GM12878 (cell line): ENCODE measurements at regions of chr17 and their contacts with region 1.

Region 1: DNA sequence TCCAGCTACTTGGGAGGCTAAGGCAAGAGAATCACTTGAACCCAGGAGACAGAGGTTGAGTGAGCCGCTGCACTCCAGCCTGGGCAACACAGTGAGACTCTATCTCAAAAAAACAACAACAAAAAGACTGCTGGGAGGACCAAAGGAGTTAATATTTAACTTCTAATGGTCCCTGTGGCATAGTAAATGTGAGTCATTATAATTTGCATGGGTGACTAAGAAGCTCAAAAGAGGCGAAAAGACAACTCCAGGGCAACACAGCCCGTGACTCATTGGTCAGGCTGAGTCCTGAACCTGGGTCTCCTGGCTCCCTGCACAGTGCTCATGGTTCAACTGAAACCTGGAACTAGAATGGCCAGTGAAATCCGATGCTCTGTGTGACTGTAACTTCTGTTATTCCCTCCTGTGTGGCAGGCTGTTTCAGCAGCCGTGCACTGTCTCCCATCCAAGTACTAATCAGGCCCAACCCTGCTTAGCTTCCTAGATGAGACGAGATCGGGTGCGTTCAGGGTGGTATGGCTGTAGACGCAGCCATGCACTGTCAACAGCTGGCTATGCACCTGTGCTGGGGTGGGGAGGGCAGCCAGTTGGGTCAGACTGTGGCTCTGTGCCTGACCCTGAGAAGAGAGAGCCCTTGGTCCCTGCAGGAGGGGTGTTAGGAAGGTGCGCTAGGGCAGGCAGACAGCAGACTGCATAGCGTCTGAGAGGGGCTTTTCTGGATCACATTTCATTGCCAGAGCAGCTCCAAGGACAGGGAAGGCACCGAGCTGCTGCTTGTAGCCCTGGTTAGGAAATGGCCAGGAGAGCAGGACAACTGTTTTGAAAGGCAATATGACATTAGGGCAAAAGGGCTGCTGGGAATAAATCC is 14.5 kb upstream of the GPRC5C start:
- DNase-seq: peak; percentile 56
- ATAC-seq: peak; percentile 96
- H3K4me3 ChIP-seq: no peak overlapping the region
- H3K27ac ChIP-seq: no peak overlapping the region
- H3K4me1 ChIP-seq: peaks cover 4% of the 10 kb centered on the region; the same call in 1 of the 2 replicates
- H3K27me3 ChIP-seq: no peaks in the 10 kb centered on the region
- CTCF ChIP-seq: no peak
- EP300 ChIP-seq: no peak
- POLR2A ChIP-seq: no peak
- RAD21 ChIP-seq: no peak

Region 2: GRCh38 chr17:74340470-74341023 is 76.9 kb before region 1 on chr17:
- CTCF ChIA-PET with region 1: no interaction called
- POLR2A ChIA-PET with region 1: no interaction called
- RAD21 ChIA-PET with region 1: no interaction called
- SMC1A ChIA-PET with region 1: no interaction called
- in situ Hi-C with region 1: no loop called
- intact Hi-C with region 1: no loop called
- DNase-seq: no peak
- ATAC-seq: peak; percentile 65
- H3K4me3 ChIP-seq: no peak overlapping the region
- H3K27ac ChIP-seq: no peak overlapping the region
- H3K4me1 ChIP-seq: no peaks in the 10 kb centered on the region
- H3K27me3 ChIP-seq: no peaks in the 10 kb centered on the region; a peak in 2 of 4 replicates
- CTCF ChIP-seq: no peak
- EP300 ChIP-seq: no peak
- POLR2A ChIP-seq: no peak
- RAD21 ChIP-seq: no peak

Region 3: DNA sequence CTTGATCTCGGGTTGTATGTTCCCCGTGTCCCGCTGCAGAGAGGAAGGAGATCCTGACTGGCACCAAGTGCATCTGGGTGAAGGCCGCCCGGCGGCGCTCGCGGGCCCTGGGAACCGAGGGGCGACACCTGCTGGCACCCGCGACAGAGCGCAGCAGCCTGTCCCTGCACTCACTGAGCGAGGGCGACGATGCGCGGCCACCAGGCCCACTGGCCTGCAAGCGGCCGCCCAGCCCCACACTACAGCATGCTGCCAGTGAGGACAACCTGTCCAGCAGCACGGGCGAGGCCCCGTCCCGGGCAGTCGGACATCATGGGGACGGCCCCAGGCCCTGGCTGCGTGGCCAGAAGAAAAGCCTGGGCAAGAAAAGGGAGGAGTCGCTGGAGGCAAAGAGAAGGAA is 63.3 kb before region 1 on chr17:
- CTCF ChIA-PET with region 1: no interaction called
- POLR2A ChIA-PET with region 1: no interaction called
- RAD21 ChIA-PET with region 1: no interaction called
- SMC1A ChIA-PET with region 1: no interaction called
- in situ Hi-C with region 1: no loop called
- intact Hi-C with region 1: no loop called
- DNase-seq: no peak
- ATAC-seq: peak; percentile 96
- H3K4me3 ChIP-seq: no peak overlapping the region
- H3K27ac ChIP-seq: no peak overlapping the region
- H3K4me1 ChIP-seq: no peaks in the 10 kb centered on the region
- H3K27me3 ChIP-seq: peaks cover 3 to 8% of the 10 kb centered on the region in 2 experiments; a peak in 3 of 4 replicates
- CTCF ChIP-seq: peak; percentile 91 to 96 (median 95)
- EP300 ChIP-seq: no peak
- POLR2A ChIP-seq: no peak
- RAD21 ChIP-seq: peak; percentile 47

Region 4: DNA sequence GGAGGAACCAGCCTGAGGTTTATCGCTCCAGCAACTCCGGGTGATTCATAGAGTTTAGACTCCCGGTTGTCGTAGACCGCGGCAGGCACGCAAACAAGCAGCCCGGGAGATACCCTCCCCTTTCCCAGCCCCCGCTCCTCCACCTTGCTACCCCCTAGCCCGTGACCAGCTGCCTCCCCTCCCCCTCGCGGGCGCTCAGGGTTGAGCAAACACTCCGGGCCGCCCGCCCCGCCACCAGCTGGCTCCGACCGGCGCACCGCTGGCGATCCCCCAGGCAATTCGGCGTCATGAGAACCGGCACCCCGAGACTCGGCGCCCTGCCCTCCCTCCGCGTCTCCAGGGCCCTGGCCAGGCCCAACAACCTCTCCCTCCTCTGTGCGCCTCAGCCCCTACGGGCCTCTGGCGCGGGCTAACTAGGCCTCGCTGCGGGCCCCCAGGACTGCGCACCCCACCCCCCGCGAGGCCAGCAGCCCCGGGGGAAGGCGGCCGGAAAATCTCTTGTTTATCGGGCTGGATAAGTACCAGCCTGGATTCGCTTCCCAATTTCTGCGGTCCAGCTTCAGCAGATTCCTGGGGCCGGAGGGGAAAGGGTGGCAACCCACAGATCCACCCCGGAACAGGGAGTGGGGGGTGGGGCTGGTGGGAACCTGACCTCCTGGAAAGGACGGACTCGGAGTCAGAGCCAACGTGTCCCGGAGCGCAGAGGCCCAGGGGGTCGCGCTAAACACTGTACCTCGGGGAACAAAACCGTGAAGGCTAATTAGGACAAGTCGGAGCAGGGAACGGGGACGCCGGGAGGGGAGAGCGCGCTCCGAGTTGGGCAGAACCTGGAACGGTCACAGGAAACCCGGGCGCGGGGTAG is 13.5 kb after region 1 on chr17:
- CTCF ChIA-PET with region 1: interaction called, 8 read pairs
- POLR2A ChIA-PET with region 1: interaction called, 11 read pairs
- RAD21 ChIA-PET with region 1: interaction called, 13 read pairs
- SMC1A ChIA-PET with region 1: interaction called, 6 read pairs
- in situ Hi-C with region 1: no loop called
- intact Hi-C with region 1: loop called (anchors 2 kb)
- DNase-seq: peak; percentile 26
- ATAC-seq: peak; percentile 79
- H3K4me3 ChIP-seq: no peak overlapping the region; the same call in 1 of the 2 replicates
- H3K27ac ChIP-seq: no peak overlapping the region; the same call in 1 of the 2 replicates
- H3K4me1 ChIP-seq: peaks cover 17% of the 10 kb centered on the region
- H3K27me3 ChIP-seq: peaks cover 3 to 11% of the 10 kb centered on the region in 2 experiments; a peak in 3 of 4 replicates
- CTCF ChIP-seq: no peak
- EP300 ChIP-seq: peak in 1 of 2 experiments; percentile 50; a peak in 2 of 4 replicates
- POLR2A ChIP-seq: no peak
- RAD21 ChIP-seq: no peak